CD8-positive, alpha-beta T cell (primary cell): ENCODE measurements at regions of chr9 and their contacts with region 1.

Region 1: DNA sequence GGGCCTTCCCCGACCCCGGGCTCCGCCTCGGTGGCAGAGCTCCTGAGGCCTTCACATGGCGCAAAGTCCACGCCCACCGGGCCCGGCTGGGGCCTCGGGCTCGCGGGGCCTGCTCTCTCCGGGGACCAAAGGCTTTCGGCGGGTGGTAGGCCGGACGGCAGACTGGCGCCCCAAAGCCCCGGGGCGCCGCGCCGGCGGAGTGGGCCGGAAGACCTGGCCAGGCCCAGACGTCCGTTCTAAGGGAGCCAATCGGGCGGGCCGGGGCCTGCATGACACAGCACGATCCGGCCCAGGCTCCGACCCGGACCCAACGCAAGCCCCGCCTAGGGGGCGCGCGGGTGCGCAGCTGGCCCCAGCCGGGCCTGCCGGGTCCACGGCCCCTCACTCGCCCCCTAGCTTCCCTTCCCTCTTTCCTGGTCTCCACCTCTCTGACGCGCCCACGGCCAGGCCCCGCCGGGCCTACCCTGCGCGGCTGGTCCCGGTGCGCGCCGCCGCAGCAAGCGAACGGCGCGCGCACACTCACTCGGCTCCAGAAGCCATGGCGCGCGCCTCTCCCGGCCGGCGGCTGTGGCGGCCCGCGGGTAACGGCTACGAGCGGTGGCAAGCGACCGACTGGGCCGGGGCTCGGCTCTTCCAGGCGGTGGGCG is 488 bp downstream of the VCP start:
- DNase-seq: peak; percentile 40 to 87 (median 73)
- ATAC-seq: peak; percentile 49
- H3K4me3 ChIP-seq: peak overlapping the region; percentile 82 to 93
- H3K4me3 Mint-ChIP-seq: peak overlapping the region; percentile 93
- H3K27ac ChIP-seq: peak overlapping the region; percentile 91 to 94
- H3K27ac Mint-ChIP-seq: peak overlapping the region; percentile 97
- H3K4me1 ChIP-seq: peaks cover 49% of the 10 kb centered on the region
- H3K4me1 Mint-ChIP-seq: peaks cover 49% of the 10 kb centered on the region
- H3K27me3 ChIP-seq: no peaks in the 10 kb centered on the region
- H3K27me3 Mint-ChIP-seq: no peaks in the 10 kb centered on the region
- CTCF ChIP-seq: peak; percentile 43

Region 2: GRCh38 chr9:34458013-34458958 is 613.7 kb before region 1 on chr9 and contains the starts of genes DNAI1 and FAM219A:
- CTCF ChIA-PET with region 1: no interaction called
- POLR2A ChIA-PET with region 1: no interaction called
- intact Hi-C with region 1: loop called in 1 of 2 experiments (anchors 5 kb)
- DNase-seq: peak; percentile 98 to 99 (median 99)
- ATAC-seq: peak; percentile 96
- H3K4me3 ChIP-seq: peak within 1 kb of the TSS; percentile 61 to 67
- H3K4me3 Mint-ChIP-seq: peak within 1 kb of the TSS; percentile 91
- H3K27ac ChIP-seq: peak within 1 kb of the TSS in 1 of 2 experiments; percentile 29
- H3K27ac Mint-ChIP-seq: peak within 1 kb of the TSS; percentile 46
- H3K4me1 ChIP-seq: peaks cover 14% of the 10 kb centered on the region
- H3K4me1 Mint-ChIP-seq: peaks cover 30% of the 10 kb centered on the region
- H3K27me3 ChIP-seq: no peaks in the 10 kb centered on the region
- H3K27me3 Mint-ChIP-seq: no peaks in the 10 kb centered on the region
- CTCF ChIP-seq: no peak
- total RNA-seq, gene DNAI1: not detected
- total RNA-seq, gene FAM219A: 5.5 to 5.9 TPM

Region 3: DNA sequence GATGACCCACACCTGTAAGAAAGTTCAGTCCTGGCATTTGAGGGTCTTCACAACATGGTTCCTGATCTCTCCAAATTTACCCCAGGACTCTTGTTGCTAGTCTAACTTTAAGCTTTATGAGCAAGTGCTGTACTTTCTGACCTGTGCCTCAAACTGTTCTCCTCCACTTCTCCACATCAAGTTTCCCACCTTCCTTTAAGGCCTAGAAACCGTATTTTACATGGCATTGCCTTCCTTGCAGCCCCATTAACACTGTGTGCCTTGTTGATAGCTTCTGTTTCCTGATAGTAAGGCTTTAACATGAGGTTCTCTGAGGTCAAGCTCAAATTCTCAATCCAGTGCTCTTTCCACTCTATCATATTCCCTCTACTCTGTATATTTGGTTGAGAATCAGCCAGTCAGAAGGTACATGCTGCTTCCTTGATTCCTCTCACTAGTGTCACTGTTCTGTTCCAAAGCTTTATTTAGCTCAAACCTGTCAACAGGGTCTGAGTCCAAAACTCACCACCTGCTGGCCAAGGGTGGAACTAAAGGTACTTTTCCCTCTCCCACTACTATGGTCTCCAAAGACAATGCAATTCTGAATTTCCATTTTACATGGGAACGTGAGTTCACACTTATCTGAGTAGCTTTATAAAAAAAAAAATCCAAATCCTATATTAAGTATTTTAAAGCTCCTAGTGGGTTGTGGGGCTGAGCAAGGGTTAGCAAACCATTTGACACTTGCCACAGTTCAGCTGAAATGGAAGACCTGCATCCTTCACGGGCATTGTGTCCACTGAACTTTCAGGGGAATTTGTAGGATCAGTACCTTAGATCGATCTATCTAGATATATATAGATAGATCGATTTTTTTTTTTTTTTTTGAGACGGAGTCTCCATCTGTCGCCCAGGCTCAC is 20.6 kb before region 1 on chr9:
- CTCF ChIA-PET with region 1: interaction called, 13 read pairs
- POLR2A ChIA-PET with region 1: interaction called, 9 read pairs
- intact Hi-C with region 1: no loop called
- DNase-seq: peak in 8 of 9 experiments; percentile 19 to 65 (median 48)
- ATAC-seq: peak; percentile 84
- H3K4me3 ChIP-seq: no peak overlapping the region
- H3K4me3 Mint-ChIP-seq: no peak overlapping the region
- H3K27ac ChIP-seq: no peak overlapping the region
- H3K27ac Mint-ChIP-seq: peak overlapping the region; percentile 15
- H3K4me1 ChIP-seq: no peaks in the 10 kb centered on the region
- H3K4me1 Mint-ChIP-seq: peaks cover 4% of the 10 kb centered on the region
- H3K27me3 ChIP-seq: no peaks in the 10 kb centered on the region
- H3K27me3 Mint-ChIP-seq: no peaks in the 10 kb centered on the region
- CTCF ChIP-seq: peak; percentile 78

Region 4: DNA sequence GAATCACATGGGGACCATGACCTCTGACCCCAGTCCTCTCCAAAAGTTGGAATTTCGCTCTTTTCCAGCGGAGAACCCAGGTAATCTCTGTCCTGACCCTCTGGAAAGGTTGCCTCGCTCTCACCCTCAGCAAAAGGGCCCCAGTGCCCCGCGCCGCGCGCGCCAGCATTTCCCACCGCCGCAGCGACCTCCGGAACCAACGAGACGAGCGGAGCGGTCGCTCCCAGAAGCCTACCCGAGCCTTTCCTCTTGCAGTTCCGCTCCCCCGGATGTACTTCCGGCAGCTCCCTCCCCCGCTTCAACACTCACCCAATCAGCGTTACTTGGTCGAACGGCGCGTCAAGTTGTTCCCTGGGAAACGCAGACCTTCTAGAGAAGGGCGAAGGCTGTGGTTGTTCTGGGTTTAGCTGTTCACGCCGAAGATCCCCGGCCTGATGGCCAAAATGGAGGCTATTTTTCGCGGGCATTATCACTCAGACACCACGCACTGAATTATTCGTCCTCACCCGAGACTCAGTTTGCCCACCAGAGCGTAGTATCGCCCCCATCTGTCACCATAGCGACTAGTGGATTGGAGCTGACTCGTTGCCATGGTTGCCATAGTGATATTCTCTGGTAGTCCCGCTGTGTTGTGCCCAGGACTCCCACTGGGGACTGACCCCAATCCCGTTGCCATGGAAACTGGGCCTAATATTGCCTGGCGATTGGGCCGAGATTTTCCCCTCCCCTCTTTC is 31.2 kb after region 1 on chr9 and contains the start of gene STOML2:
- CTCF ChIA-PET with region 1: interaction called, 147 read pairs
- POLR2A ChIA-PET with region 1: interaction called, 27 read pairs
- intact Hi-C with region 1: loop called in 1 of 2 experiments (anchors 1 kb)
- DNase-seq: peak; percentile 83 to 97 (median 93)
- ATAC-seq: peak; percentile 96
- H3K4me3 ChIP-seq: peak within 1 kb of the TSS; percentile 78 to 95
- H3K4me3 Mint-ChIP-seq: peak within 1 kb of the TSS; percentile 89
- H3K27ac ChIP-seq: peak within 1 kb of the TSS; percentile 79 to 92
- H3K27ac Mint-ChIP-seq: peak within 1 kb of the TSS; percentile 90
- H3K4me1 ChIP-seq: peaks cover 14% of the 10 kb centered on the region
- H3K4me1 Mint-ChIP-seq: peaks cover 27% of the 10 kb centered on the region
- H3K27me3 ChIP-seq: no peaks in the 10 kb centered on the region
- H3K27me3 Mint-ChIP-seq: no peaks in the 10 kb centered on the region
- CTCF ChIP-seq: no peak
- total RNA-seq, gene STOML2: 30.5 to 31.3 TPM

Region 5: GRCh38 chr9:35258676-35259474 is 186.9 kb after region 1 on chr9:
- CTCF ChIA-PET with region 1: no interaction called
- POLR2A ChIA-PET with region 1: no interaction called
- intact Hi-C with region 1: loop called in 1 of 2 experiments (anchors 2 kb)
- DNase-seq: peak in 8 of 9 experiments; percentile 7 to 62 (median 45)
- ATAC-seq: no peak
- H3K4me3 ChIP-seq: no peak overlapping the region
- H3K4me3 Mint-ChIP-seq: no peak overlapping the region
- H3K27ac ChIP-seq: no peak overlapping the region
- H3K27ac Mint-ChIP-seq: no peak overlapping the region
- H3K4me1 ChIP-seq: no peaks in the 10 kb centered on the region
- H3K4me1 Mint-ChIP-seq: no peaks in the 10 kb centered on the region
- H3K27me3 ChIP-seq: no peaks in the 10 kb centered on the region
- H3K27me3 Mint-ChIP-seq: peaks cover 8% of the 10 kb centered on the region
- CTCF ChIP-seq: peak; percentile 57